ENCODE measurements at regions of chr13 and their contacts with region 1.

Region 1: GRCh38 chr13:20495082-20496023 is 30.3 kb downstream of the CRYL1 start:
- DNase-seq: peak; percentile 40
- ATAC-seq: peak; percentile 87
- H3K4me3 ChIP-seq: no peak overlapping the region
- H3K27ac ChIP-seq: no peak overlapping the region
- H3K4me1 ChIP-seq: no peaks in the 10 kb centered on the region
- H3K27me3 ChIP-seq: no peaks in the 10 kb centered on the region
- CTCF ChIP-seq: peak; percentile 92 to 95 (median 93)
- EP300 ChIP-seq: no peak
- POLR2A ChIP-seq: no peak
- RAD21 ChIP-seq: peak; percentile 94

Region 2: DNA sequence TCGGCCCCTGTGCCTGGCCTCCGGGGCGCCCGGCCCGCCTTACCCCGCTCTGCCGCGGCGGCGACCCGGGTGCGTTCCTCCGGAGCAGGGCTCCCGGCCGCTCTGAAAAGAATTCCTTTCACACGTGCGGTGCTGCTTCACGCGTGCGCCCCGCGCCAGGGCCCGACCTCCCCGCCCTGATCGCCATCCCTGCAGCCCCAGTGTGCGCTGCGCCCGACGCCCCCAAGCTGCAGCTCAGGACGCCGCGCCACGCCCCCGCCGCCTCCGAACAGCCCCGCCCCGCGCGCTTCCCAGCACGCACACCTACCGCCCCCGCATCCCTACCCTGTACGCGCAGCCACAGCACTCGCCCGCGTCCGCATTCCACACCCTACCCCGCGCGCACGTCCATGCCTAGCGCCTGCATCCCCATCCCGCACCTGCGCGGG is 334.5 kb before region 1 on chr13 and contains the start of gene GJA3:
- CTCF ChIA-PET with region 1: no interaction called
- POLR2A ChIA-PET with region 1: no interaction called
- RAD21 ChIA-PET with region 1: no interaction called
- SMC1A ChIA-PET with region 1: no interaction called
- in situ Hi-C with region 1: no loop called
- intact Hi-C with region 1: no loop called
- DNase-seq: no peak
- ATAC-seq: peak; percentile 68
- H3K4me3 ChIP-seq: peak within 1 kb of the TSS; percentile 71
- H3K27ac ChIP-seq: no peak within 1 kb of the TSS
- H3K4me1 ChIP-seq: no peaks in the 10 kb centered on the region; the same call in 1 of the 2 replicates
- H3K27me3 ChIP-seq: peaks cover 3 to 5% of the 10 kb centered on the region in 2 experiments
- CTCF ChIP-seq: no peak
- EP300 ChIP-seq: no peak
- POLR2A ChIP-seq: no peak
- RAD21 ChIP-seq: no peak
- polyA plus RNA-seq, gene GJA3: not detected

Region 3: GRCh38 chr13:20197361-20197834 is 298.0 kb before region 1 on chr13:
- CTCF ChIA-PET with region 1: interaction called, 101 read pairs
- POLR2A ChIA-PET with region 1: no interaction called
- RAD21 ChIA-PET with region 1: interaction called, 13 read pairs
- SMC1A ChIA-PET with region 1: interaction called, 27 read pairs
- in situ Hi-C with region 1: no loop called
- intact Hi-C with region 1: no loop called
- DNase-seq: no peak
- ATAC-seq: peak; percentile 64
- H3K4me3 ChIP-seq: no peak overlapping the region
- H3K27ac ChIP-seq: no peak overlapping the region
- H3K4me1 ChIP-seq: peaks cover 6% of the 10 kb centered on the region; the same call in 1 of the 2 replicates
- H3K27me3 ChIP-seq: peaks cover 4 to 21% of the 10 kb centered on the region in 2 experiments; a peak in 3 of 4 replicates
- CTCF ChIP-seq: peak; percentile 71 to 79 (median 73)
- EP300 ChIP-seq: no peak
- POLR2A ChIP-seq: no peak
- RAD21 ChIP-seq: peak; percentile 85

Region 4: GRCh38 chr13:20391597-20392452 is 103.5 kb before region 1 on chr13:
- CTCF ChIA-PET with region 1: no interaction called
- POLR2A ChIA-PET with region 1: no interaction called
- RAD21 ChIA-PET with region 1: no interaction called
- SMC1A ChIA-PET with region 1: no interaction called
- in situ Hi-C with region 1: no loop called
- intact Hi-C with region 1: no loop called
- DNase-seq: no peak
- ATAC-seq: no peak
- H3K4me3 ChIP-seq: no peak overlapping the region
- H3K27ac ChIP-seq: no peak overlapping the region
- H3K4me1 ChIP-seq: peaks cover 6% of the 10 kb centered on the region
- H3K27me3 ChIP-seq: no peaks in the 10 kb centered on the region
- CTCF ChIP-seq: no peak
- EP300 ChIP-seq: no peak
- POLR2A ChIP-seq: no peak
- RAD21 ChIP-seq: no peak

Region 5: GRCh38 chr13:20553311-20553710 is 58.0 kb after region 1 on chr13:
- CTCF ChIA-PET with region 1: interaction called, 7 read pairs
- POLR2A ChIA-PET with region 1: no interaction called
- RAD21 ChIA-PET with region 1: interaction called, 4 read pairs
- SMC1A ChIA-PET with region 1: interaction called, 3 read pairs
- in situ Hi-C with region 1: no loop called
- intact Hi-C with region 1: loop called (anchors 5 kb)
- DNase-seq: no peak
- ATAC-seq: no peak
- H3K4me3 ChIP-seq: no peak overlapping the region
- H3K27ac ChIP-seq: no peak overlapping the region
- H3K4me1 ChIP-seq: no peaks in the 10 kb centered on the region
- H3K27me3 ChIP-seq: no peaks in the 10 kb centered on the region
- CTCF ChIP-seq: no peak
- EP300 ChIP-seq: no peak
- POLR2A ChIP-seq: no peak
- RAD21 ChIP-seq: no peak

Region 6: GRCh38 chr13:20773194-20774080 is 278.1 kb after region 1 on chr13 and contains the start of gene EEF1AKMT1:
- CTCF ChIA-PET with region 1: interaction called, 7 read pairs
- POLR2A ChIA-PET with region 1: no interaction called
- RAD21 ChIA-PET with region 1: no interaction called
- SMC1A ChIA-PET with region 1: interaction called, 3 read pairs
- in situ Hi-C with region 1: no loop called
- intact Hi-C with region 1: loop called (anchors 5 kb)
- DNase-seq: peak; percentile 79
- ATAC-seq: peak; percentile 95
- H3K4me3 ChIP-seq: peak within 1 kb of the TSS; percentile 64
- H3K27ac ChIP-seq: peak within 1 kb of the TSS; percentile 82
- H3K4me1 ChIP-seq: peaks cover 4% of the 10 kb centered on the region; the same call in 1 of the 2 replicates
- H3K27me3 ChIP-seq: no peaks in the 10 kb centered on the region
- CTCF ChIP-seq: no peak
- EP300 ChIP-seq: no peak
- POLR2A ChIP-seq: peak; percentile 85
- RAD21 ChIP-seq: no peak
- polyA plus RNA-seq, gene EEF1AKMT1: 42.8 to 44.5 TPM

Region 7: GRCh38 chr13:20924758-20925394 is 429.5 kb after region 1 on chr13:
- CTCF ChIA-PET with region 1: interaction called, 82 read pairs
- POLR2A ChIA-PET with region 1: no interaction called
- RAD21 ChIA-PET with region 1: interaction called, 13 read pairs
- SMC1A ChIA-PET with region 1: interaction called, 19 read pairs
- in situ Hi-C with region 1: loop called (anchors 5 kb)
- intact Hi-C with region 1: loop called (anchors 1 kb)
- DNase-seq: no peak
- ATAC-seq: peak; percentile 79
- H3K4me3 ChIP-seq: no peak overlapping the region
- H3K27ac ChIP-seq: no peak overlapping the region
- H3K4me1 ChIP-seq: no peaks in the 10 kb centered on the region
- H3K27me3 ChIP-seq: no peaks in the 10 kb centered on the region
- CTCF ChIP-seq: peak; percentile 76 to 80 (median 77)
- EP300 ChIP-seq: no peak
- POLR2A ChIP-seq: no peak
- RAD21 ChIP-seq: peak; percentile 89

Region 8: GRCh38 chr13:21476893-21477472 is 981.6 kb after region 1 on chr13:
- CTCF ChIA-PET with region 1: interaction called, 3 read pairs
- POLR2A ChIA-PET with region 1: no interaction called
- RAD21 ChIA-PET with region 1: no interaction called
- SMC1A ChIA-PET with region 1: no interaction called
- in situ Hi-C with region 1: no loop called
- intact Hi-C with region 1: loop called (anchors 5 kb)
- DNase-seq: peak; percentile 50
- ATAC-seq: peak; percentile 97
- H3K4me3 ChIP-seq: peak overlapping the region; percentile 71
- H3K27ac ChIP-seq: peak overlapping the region; percentile 48; the same call in 1 of the 2 replicates
- H3K4me1 ChIP-seq: no peaks in the 10 kb centered on the region
- H3K27me3 ChIP-seq: no peaks in the 10 kb centered on the region
- CTCF ChIP-seq: peak; percentile 88 to 98 (median 98)
- EP300 ChIP-seq: no peak
- POLR2A ChIP-seq: peak; percentile 42; the same call in 1 of the 2 replicates
- RAD21 ChIP-seq: peak; percentile 87